CD8-positive, alpha-beta T cell (primary cell): ENCODE measurements at regions of chr4 and their contacts with region 1.

Region 1: DNA sequence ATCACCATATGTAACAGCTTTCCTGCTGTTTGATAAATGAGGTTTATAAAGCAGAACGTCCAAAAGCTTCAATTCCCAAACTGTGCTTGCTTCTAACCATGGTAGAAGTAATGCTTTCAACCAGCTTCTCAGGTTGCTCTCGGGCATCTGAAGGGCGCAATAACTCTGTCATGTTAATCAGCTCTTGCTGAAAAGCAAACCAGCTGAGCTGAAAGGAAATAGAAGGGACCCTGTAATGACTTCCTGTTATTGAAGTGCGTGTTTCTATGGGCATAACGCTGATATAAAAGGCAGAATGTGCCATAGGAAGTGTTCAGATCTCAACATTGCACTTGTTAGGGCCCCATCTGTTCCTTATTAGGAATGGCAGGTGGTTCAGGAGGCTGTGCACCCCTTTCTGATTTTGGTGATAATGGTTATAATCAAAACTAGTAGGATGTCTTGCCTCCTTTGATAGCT is 21.2 kb downstream of the HERC3 start:
- DNase-seq: peak in 8 of 9 experiments; percentile 18 to 88 (median 49)
- ATAC-seq: peak; percentile 92
- H3K4me3 ChIP-seq: peak overlapping the region; percentile 16 to 19
- H3K4me3 Mint-ChIP-seq: peak overlapping the region; percentile 78
- H3K27ac ChIP-seq: peak overlapping the region; percentile 64 to 81
- H3K27ac Mint-ChIP-seq: peak overlapping the region; percentile 96
- H3K4me1 ChIP-seq: peaks cover 52% of the 10 kb centered on the region
- H3K4me1 Mint-ChIP-seq: peaks cover 87% of the 10 kb centered on the region
- H3K27me3 ChIP-seq: no peaks in the 10 kb centered on the region
- H3K27me3 Mint-ChIP-seq: no peaks in the 10 kb centered on the region
- CTCF ChIP-seq: no peak

Region 2: GRCh38 chr4:88378691-88379559 is 234.5 kb before region 1 on chr4 and contains the start of gene HERC6:
- CTCF ChIA-PET with region 1: no interaction called
- POLR2A ChIA-PET with region 1: no interaction called
- intact Hi-C with region 1: loop called in 1 of 2 experiments (anchors 10 kb)
- DNase-seq: peak; percentile 39 to 93 (median 73)
- ATAC-seq: peak; percentile 63
- H3K4me3 ChIP-seq: peak within 1 kb of the TSS; percentile 82 to 98
- H3K4me3 Mint-ChIP-seq: peak within 1 kb of the TSS; percentile 96
- H3K27ac ChIP-seq: peak within 1 kb of the TSS; percentile 88 to 91
- H3K27ac Mint-ChIP-seq: peak within 1 kb of the TSS; percentile 95
- H3K4me1 ChIP-seq: peaks cover 31% of the 10 kb centered on the region
- H3K4me1 Mint-ChIP-seq: peaks cover 43% of the 10 kb centered on the region
- H3K27me3 ChIP-seq: no peaks in the 10 kb centered on the region
- H3K27me3 Mint-ChIP-seq: no peaks in the 10 kb centered on the region
- CTCF ChIP-seq: peak; percentile 57
- total RNA-seq, gene HERC6: 8.2 TPM

Region 3: GRCh38 chr4:88600176-88600838 is 13.1 kb before region 1 on chr4:
- CTCF ChIA-PET with region 1: interaction called, 16 read pairs
- POLR2A ChIA-PET with region 1: interaction called, 25 read pairs
- intact Hi-C with region 1: no loop called
- DNase-seq: peak in 2 of 9 experiments; percentile 31 to 34
- ATAC-seq: peak; percentile 31
- H3K4me3 ChIP-seq: no peak overlapping the region
- H3K4me3 Mint-ChIP-seq: no peak overlapping the region
- H3K27ac ChIP-seq: peak overlapping the region in 1 of 2 experiments; percentile 31
- H3K27ac Mint-ChIP-seq: no peak overlapping the region
- H3K4me1 ChIP-seq: peaks cover 31% of the 10 kb centered on the region
- H3K4me1 Mint-ChIP-seq: peaks cover 78% of the 10 kb centered on the region
- H3K27me3 ChIP-seq: no peaks in the 10 kb centered on the region
- H3K27me3 Mint-ChIP-seq: no peaks in the 10 kb centered on the region
- CTCF ChIP-seq: no peak

Region 4: DNA sequence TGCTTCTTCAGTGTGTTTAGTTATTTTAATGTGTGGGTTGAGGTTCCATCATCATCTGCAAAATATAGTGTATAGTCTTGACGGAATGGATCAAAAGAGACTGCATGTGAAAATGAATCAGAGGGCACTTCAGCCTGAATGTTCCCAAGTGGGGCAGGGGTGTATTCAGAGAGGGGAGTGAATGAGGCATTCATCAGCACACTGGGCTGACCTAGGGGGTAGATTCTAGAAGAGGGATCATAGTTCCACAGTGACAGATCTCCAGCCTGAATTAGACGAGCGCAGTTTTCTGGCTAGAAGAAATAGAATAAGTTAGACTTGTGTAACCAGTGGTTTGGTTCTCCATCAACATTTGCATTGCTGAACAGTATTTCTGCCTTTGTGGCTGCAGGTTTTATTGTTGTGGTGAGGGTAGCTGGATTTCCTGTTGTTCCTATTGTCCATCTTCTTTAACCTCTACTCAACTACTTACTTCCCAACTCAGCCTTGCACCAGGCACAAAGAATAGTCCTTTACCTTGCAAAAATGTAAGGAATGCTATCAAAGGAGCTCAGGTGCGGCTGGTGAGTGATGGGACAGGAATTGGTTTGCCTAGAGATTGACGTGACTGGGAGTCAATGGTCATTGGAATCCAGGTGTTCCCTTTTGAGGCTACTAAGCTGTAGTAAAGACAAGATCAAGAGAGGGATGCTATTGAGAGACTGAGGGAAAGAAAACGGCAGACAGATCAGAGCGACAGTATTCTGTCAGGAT is 33.3 kb after region 1 on chr4:
- CTCF ChIA-PET with region 1: interaction called, 3 read pairs
- POLR2A ChIA-PET with region 1: no interaction called
- intact Hi-C with region 1: loop called in 1 of 2 experiments (anchors 5 kb)
- DNase-seq: no peak
- ATAC-seq: no peak
- H3K4me3 ChIP-seq: no peak overlapping the region
- H3K4me3 Mint-ChIP-seq: no peak overlapping the region
- H3K27ac ChIP-seq: no peak overlapping the region
- H3K27ac Mint-ChIP-seq: peak overlapping the region; percentile 1
- H3K4me1 ChIP-seq: peaks cover 18% of the 10 kb centered on the region
- H3K4me1 Mint-ChIP-seq: peaks cover 64% of the 10 kb centered on the region
- H3K27me3 ChIP-seq: no peaks in the 10 kb centered on the region
- H3K27me3 Mint-ChIP-seq: no peaks in the 10 kb centered on the region
- CTCF ChIP-seq: no peak

Region 5: GRCh38 chr4:88753658-88754571 is 140.5 kb after region 1 on chr4:
- CTCF ChIA-PET with region 1: no interaction called
- POLR2A ChIA-PET with region 1: no interaction called
- intact Hi-C with region 1: no loop called
- DNase-seq: no peak
- ATAC-seq: no peak
- H3K4me3 ChIP-seq: no peak overlapping the region
- H3K4me3 Mint-ChIP-seq: no peak overlapping the region
- H3K27ac ChIP-seq: no peak overlapping the region
- H3K27ac Mint-ChIP-seq: no peak overlapping the region
- H3K4me1 ChIP-seq: no peaks in the 10 kb centered on the region
- H3K4me1 Mint-ChIP-seq: no peaks in the 10 kb centered on the region
- H3K27me3 ChIP-seq: no peaks in the 10 kb centered on the region
- H3K27me3 Mint-ChIP-seq: peaks cover 4% of the 10 kb centered on the region
- CTCF ChIP-seq: no peak